SK-N-SH (cell line): ENCODE measurements at regions of chr10 and their contacts with region 1.

Region 1: GRCh38 chr10:26334932-26335573 is 103.1 kb upstream of the APBB1IP start:
- DNase-seq: peak; percentile 43
- H3K4me3 ChIP-seq: peak overlapping the region in 1 of 2 experiments; percentile 34; a peak in 2 of 4 replicates
- H3K27ac ChIP-seq: no peak overlapping the region
- H3K4me1 ChIP-seq: peaks cover 0 to 3% of the 10 kb centered on the region in 2 experiments; a peak in 1 of 4 replicates
- H3K27me3 ChIP-seq: no peaks in the 10 kb centered on the region
- CTCF ChIP-seq: peak; percentile 76
- EP300 ChIP-seq: no peak
- RAD21 ChIP-seq: peak; percentile 86

Region 2: GRCh38 chr10:25988583-25988982 is 346.5 kb before region 1 on chr10:
- CTCF ChIA-PET with region 1: no interaction called
- POLR2A ChIA-PET with region 1: no interaction called
- DNase-seq: no peak
- H3K4me3 ChIP-seq: no peak overlapping the region
- H3K27ac ChIP-seq: no peak overlapping the region
- H3K4me1 ChIP-seq: no peaks in the 10 kb centered on the region
- H3K27me3 ChIP-seq: no peaks in the 10 kb centered on the region
- CTCF ChIP-seq: no peak
- EP300 ChIP-seq: no peak
- RAD21 ChIP-seq: no peak

Region 3: GRCh38 chr10:26251925-26252324 is 83.1 kb before region 1 on chr10:
- CTCF ChIA-PET with region 1: no interaction called
- POLR2A ChIA-PET with region 1: no interaction called
- DNase-seq: no peak
- H3K4me3 ChIP-seq: no peak overlapping the region
- H3K27ac ChIP-seq: no peak overlapping the region
- H3K4me1 ChIP-seq: no peaks in the 10 kb centered on the region
- H3K27me3 ChIP-seq: no peaks in the 10 kb centered on the region
- CTCF ChIP-seq: no peak
- EP300 ChIP-seq: no peak
- RAD21 ChIP-seq: no peak

Region 4: GRCh38 chr10:26556748-26557640 is 221.9 kb after region 1 on chr10:
- CTCF ChIA-PET with region 1: interaction called, 31 read pairs
- POLR2A ChIA-PET with region 1: no interaction called
- DNase-seq: peak; percentile 61
- H3K4me3 ChIP-seq: peak overlapping the region in 1 of 2 experiments; percentile 38; a peak in 1 of 4 replicates
- H3K27ac ChIP-seq: no peak overlapping the region
- H3K4me1 ChIP-seq: no peaks in the 10 kb centered on the region
- H3K27me3 ChIP-seq: no peaks in the 10 kb centered on the region; the same call in 1 of the 2 replicates
- CTCF ChIP-seq: peak; percentile 90
- EP300 ChIP-seq: no peak
- RAD21 ChIP-seq: peak; percentile 92